ENCODE measurements at regions of chr6 and their contacts with region 1.

Region 1: DNA sequence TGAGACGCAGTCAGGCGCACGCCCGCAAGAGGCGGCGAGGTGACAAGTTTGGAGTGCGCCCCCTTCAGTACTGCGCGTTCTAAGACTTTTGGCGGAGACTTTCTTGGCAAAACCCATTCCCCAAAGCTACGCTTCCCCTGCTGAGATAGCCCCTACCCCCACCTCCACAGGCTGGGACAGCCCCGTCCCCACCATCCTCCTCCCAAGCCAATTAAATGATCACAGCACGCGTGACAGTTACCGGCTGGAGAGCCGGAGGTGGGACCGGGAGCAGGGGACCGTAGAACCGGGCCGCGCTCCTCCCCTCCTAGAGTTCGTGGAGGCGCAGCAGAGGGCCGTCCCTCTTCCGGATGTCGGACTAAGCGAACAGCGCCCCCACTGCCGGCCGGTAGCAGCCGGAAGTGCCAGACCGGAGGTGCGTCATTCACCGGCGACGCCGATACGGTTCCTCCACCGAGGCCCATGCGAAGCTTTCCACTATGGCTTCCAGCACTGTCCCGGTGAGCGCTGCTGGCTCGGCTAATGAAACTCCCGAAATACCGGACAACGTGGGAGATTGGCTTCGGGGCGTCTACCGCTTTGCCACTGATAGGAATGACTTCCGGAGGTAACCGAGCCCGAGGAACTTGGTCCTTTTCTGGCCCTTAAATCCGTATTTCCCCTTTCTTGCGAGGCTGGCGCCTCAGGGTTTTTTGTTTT is at the start of gene TOMM6:
- DNase-seq: peak; percentile 97
- H3K4me3 Mint-ChIP-seq: peak within 1 kb of the TSS; percentile 96
- H3K27ac Mint-ChIP-seq: peak within 1 kb of the TSS; percentile 97
- H3K4me1 Mint-ChIP-seq: peaks cover 17% of the 10 kb centered on the region
- H3K27me3 Mint-ChIP-seq: peaks cover 39% of the 10 kb centered on the region

Region 2: DNA sequence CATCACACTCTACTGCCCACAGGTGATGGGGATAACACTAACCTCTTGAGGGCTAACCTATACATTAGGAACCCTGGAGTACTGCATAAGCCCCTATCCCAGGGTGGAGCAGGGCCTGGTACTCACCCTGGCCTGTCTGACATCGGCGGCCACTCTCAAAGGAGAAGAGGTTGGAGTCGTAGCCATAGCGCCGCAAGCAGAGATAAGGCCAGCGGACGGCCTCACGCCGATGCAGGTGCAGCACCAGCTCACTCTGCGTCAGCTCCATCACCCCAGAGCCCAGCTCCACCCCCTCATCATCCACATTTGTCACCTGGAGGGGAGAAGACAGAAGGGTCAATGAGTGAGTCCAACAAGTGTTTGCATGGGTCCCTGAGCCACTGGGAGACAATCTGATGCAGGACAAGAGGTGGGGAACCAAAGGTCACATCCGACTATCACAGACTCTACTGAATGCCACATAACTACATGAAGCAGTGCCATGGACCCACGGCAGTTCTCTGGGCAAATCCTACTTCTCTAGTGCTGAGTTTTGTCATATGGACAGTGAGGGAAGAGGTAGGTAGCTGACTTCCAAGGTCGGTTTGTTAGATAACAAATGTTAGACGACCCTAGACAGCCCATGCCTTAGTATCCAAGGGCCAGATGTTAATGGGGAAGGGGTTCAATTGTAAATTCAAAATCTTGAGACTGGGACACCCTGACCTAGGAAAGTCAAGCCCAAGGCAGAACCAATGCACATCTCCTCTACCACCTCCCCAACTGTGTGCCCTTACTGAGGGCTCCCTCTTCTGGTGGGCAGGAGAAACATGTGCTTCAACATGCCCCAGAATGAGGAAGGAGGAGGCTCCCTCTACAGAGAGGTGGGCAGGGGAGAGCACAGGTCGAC is 11.8 kb before region 1 on chr6:
- CTCF ChIA-PET with region 1: interaction called, 36 read pairs
- DNase-seq: peak; percentile 64
- H3K4me3 Mint-ChIP-seq: no peak overlapping the region
- H3K27ac Mint-ChIP-seq: no peak overlapping the region
- H3K4me1 Mint-ChIP-seq: peaks cover 14% of the 10 kb centered on the region
- H3K27me3 Mint-ChIP-seq: peaks cover 9% of the 10 kb centered on the region

Region 3: GRCh38 chr6:41801380-41801779 is 14.0 kb after region 1 on chr6:
- CTCF ChIA-PET with region 1: interaction called, 13 read pairs
- DNase-seq: no peak
- H3K4me3 Mint-ChIP-seq: no peak overlapping the region
- H3K27ac Mint-ChIP-seq: no peak overlapping the region
- H3K4me1 Mint-ChIP-seq: no peaks in the 10 kb centered on the region
- H3K27me3 Mint-ChIP-seq: no peaks in the 10 kb centered on the region

Region 4: DNA sequence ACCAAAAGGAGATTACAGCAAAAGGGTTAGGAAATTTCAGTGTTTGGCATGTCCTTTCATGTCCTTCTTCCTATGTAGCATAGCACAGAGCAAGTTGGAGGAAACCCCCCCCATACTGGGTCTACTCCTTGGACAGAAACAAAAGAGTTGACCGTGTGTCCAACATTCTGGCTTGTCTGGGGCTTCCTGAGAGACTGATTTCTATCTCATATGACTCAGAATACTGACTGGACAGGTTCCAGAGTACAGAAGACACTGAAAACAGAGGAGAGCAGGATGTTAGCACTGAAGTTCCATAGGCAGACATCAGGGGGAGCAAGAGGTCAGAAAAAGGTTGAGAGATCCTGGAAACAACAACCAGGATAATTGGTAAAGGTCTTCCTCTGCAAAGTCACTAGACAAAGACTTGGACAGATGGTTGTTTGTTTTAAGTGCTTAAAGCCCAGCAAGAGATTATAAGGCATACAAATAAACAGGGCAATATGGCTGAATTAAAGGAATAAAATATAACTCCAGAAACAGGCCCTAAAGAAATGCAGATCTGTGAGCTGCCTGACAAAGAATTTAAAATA is 59.4 kb after region 1 on chr6:
- CTCF ChIA-PET with region 1: no interaction called
- DNase-seq: peak; percentile 69
- H3K4me3 Mint-ChIP-seq: no peak overlapping the region
- H3K27ac Mint-ChIP-seq: no peak overlapping the region
- H3K4me1 Mint-ChIP-seq: peaks cover 11% of the 10 kb centered on the region
- H3K27me3 Mint-ChIP-seq: no peaks in the 10 kb centered on the region

Region 5: DNA sequence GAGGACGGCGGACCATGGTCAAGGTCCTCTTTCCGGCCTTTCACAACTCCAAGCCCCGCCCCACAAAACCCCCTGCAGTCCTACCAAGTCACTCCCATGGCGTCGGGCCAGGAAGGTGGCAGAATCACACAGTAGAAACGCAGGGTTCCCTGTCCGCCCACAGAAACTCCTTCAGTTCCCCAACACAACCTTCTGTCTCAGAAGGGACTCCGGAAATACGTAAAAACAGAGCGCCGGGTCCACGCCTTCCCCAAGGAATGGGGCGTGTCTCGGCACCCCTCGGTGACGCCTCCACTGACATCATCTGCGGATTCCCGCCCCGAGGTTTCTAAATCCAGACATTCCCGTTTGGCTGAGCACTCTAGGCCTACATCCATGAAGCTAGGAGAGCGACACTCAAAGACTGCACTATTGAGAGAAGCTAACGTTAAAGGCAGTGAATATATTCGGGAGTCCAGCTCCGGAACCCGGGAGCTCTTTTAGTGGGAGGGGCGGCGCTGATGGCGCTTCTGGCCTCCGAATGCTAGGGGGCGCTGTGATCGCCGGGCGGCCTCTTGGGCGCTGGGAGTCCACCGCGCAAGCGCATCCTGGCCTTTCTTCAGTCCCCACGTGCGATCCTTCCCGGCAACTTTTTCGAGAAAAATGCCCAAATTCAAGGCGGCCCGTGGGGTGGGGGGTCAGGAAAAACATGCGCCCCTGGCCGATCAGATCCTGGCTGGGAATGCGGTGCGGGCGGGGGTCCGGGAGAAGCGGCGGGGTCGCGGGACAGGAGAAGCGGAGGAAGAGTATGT is 133.7 kb after region 1 on chr6 and contains the starts of genes BYSL and MED20:
- CTCF ChIA-PET with region 1: interaction called, 26 read pairs
- DNase-seq: peak; percentile 95
- H3K4me3 Mint-ChIP-seq: peak within 1 kb of the TSS; percentile 100
- H3K27ac Mint-ChIP-seq: peak within 1 kb of the TSS; percentile 99
- H3K4me1 Mint-ChIP-seq: peaks cover 61% of the 10 kb centered on the region
- H3K27me3 Mint-ChIP-seq: no peaks in the 10 kb centered on the region

Region 6: DNA sequence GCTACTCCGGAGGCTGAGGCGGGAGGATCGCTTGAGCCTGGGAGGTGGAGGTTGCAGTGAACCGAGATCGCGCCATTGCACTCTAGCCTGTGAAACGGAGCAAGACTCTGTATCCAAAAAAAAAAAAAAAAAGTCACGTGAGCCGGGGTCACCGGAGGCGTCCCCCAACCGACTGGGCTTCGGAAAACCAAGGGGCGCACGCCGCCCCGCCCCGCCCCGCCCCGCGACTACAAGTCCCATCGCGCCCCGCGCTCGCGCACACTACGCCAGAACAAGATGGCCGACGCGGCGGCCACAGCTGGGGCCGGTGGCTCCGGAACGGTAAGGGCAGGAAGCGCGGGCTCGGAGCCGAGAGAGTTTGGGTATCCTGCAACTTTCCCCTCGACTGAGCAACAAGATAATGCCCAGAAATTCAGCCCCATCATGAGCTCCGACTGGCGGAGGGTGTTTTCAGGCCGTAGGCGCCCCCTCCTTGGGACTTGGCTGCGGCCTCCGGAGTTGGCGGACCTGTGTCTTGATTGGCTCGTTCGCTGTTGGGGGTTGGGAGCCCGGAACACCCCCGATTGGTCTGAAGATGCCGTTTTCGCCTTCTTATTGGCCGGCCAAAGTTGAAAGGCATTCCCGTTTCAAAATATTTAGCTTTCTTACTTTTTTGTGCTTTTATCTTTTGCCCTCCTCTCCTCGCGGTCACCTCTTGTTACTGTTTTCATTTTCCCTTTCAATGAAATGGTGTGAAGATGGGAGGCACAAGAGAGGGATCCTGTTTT is 263.1 kb after region 1 on chr6 and contains the start of gene TAF8:
- CTCF ChIA-PET with region 1: interaction called, 97 read pairs
- DNase-seq: peak; percentile 95
- H3K4me3 Mint-ChIP-seq: peak within 1 kb of the TSS; percentile 97
- H3K27ac Mint-ChIP-seq: peak within 1 kb of the TSS; percentile 98
- H3K4me1 Mint-ChIP-seq: peaks cover 77% of the 10 kb centered on the region
- H3K27me3 Mint-ChIP-seq: no peaks in the 10 kb centered on the region